ENCODE measurements at regions of chr10 and their contacts with region 1.

Region 1: GRCh38 chr10:23238015-23238414 is 45.9 kb downstream of the PTF1A start:
- DNase-seq: no peak
- H3K4me3 ChIP-seq: no peak overlapping the region
- H3K27ac ChIP-seq: no peak overlapping the region
- H3K4me1 ChIP-seq: no peaks in the 10 kb centered on the region
- H3K27me3 ChIP-seq: no peaks in the 10 kb centered on the region
- CTCF ChIP-seq: no peak

Region 2: GRCh38 chr10:24153031-24153430 is 915.0 kb after region 1 on chr10:
- CTCF ChIA-PET with region 1: no interaction called
- POLR2A ChIA-PET with region 1: interaction called, 10 read pairs
- intact Hi-C with region 1: no loop called
- DNase-seq: no peak
- H3K4me3 ChIP-seq: no peak overlapping the region
- H3K27ac ChIP-seq: no peak overlapping the region
- H3K4me1 ChIP-seq: no peaks in the 10 kb centered on the region
- H3K27me3 ChIP-seq: no peaks in the 10 kb centered on the region
- CTCF ChIP-seq: no peak

Measured in PC-9 (cell line).